ENCODE measurements at regions of chr15 and their contacts with region 1.

Region 1: DNA sequence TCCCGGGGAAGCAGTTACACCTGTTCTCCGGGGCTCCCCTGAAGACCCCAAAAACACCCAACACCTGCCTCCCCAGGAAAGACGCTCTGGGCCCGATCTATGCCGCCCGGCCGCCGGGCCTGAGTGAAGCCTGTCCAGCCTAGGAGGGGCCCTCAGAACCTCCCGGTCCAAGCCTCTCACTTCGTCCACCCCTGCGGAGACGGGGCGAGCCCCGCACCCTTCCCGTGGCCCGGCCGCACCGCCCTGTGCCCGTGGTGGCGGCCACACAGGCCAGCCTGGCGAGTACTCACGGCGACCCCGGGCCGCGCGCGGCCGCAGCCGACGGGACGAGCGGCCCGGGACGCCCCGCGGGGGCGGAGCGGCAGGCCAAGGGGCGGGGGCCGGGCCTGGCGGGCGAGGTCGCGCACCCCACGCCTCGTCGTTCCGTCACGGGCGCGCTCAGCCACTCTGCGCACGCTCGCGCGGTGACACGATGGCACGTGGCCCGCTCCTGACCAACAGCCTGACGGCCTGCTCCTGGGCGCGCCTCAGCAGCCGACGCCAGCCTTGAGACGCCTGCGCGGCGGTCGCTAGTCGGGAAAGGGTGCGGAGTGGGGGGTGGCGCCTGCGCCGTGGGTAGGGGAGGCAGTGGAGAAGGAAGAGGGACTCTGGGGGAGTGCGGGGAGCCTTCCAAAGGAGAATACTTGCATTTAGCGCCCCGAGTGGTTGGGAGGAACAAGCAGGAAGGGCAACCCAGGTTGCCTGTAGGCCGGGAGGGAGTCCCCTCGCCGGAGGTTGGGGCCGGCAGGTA is at the start of gene PARP6:
- DNase-seq: peak; percentile 94 to 100 (median 99)
- ATAC-seq: peak; percentile 96
- H3K4me3 ChIP-seq: peak within 1 kb of the TSS; percentile 71
- H3K4me3 Mint-ChIP-seq: peak within 1 kb of the TSS; percentile 87 to 95 (median 90)
- H3K27ac ChIP-seq: peak within 1 kb of the TSS; percentile 90
- H3K27ac Mint-ChIP-seq: peak within 1 kb of the TSS; percentile 87 to 96 (median 93)
- H3K4me1 ChIP-seq: peaks cover 18 to 25% of the 10 kb centered on the region in 2 donors
- H3K4me1 Mint-ChIP-seq: peaks cover 24 to 53% (median 44%) of the 10 kb centered on the region in 7 donors
- H3K27me3 ChIP-seq: no peaks in the 10 kb centered on the region
- H3K27me3 Mint-ChIP-seq: no peaks in the 10 kb centered on the region
- total RNA-seq, gene PARP6: 75.8 to 129 (median 127) TPM

Region 2: DNA sequence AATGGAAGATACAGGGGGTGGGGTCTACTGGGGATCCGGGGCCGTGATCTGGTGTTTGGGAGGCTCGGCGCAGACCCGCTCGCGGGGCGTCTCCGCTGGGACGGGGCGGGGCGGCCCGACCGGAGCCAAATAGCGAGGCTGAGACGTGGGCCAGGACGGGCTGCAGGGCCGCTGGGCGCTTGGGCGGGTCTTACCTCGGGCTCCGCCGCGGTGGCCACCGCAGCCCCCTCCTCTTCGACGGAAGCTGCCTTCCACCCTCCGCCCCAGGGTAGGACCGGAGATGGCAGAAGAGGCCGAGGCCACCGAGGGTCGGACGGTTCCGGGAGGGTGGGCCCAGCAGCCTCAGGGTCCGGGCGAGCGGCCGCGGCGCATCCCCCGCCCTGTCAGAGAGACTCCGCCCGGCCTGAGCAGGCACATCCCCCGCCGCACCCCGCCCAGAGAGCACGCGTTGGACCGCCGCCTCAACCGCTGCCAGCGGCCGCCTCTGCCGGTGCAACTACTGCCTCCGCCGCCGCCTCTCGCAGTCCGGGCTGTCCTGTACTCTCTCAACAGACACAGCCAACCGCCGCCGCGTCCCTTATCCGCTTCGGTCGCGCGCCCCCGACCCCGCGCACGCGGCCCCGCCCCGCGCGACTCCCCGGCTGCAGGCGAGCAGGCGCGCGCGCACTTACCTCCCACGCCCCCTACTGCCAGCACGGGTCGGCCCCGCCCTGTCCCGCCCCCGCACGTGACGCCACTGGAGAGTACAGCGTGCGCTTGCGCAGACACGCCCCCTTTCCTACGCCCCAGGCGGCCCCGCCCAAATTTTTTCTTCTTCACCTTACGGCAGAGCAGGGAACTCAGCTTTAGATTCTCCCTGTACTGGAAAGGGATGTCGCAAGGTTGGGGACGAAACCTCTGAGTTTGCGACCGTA is 154.7 kb before region 1 on chr15 and contains the start of gene MYO9A:
- CTCF ChIA-PET with region 1: no interaction called
- POLR2A ChIA-PET with region 1: no interaction called
- intact Hi-C with region 1: loop called (anchors 1 kb)
- DNase-seq: peak; percentile 93 to 99 (median 98)
- ATAC-seq: peak; percentile 90
- H3K4me3 ChIP-seq: peak within 1 kb of the TSS; percentile 86
- H3K4me3 Mint-ChIP-seq: peak within 1 kb of the TSS; percentile 89 to 99 (median 97)
- H3K27ac ChIP-seq: peak within 1 kb of the TSS; percentile 94
- H3K27ac Mint-ChIP-seq: peak within 1 kb of the TSS; percentile 81 to 99 (median 99)
- H3K4me1 ChIP-seq: peaks cover 7 to 11% of the 10 kb centered on the region in 2 donors
- H3K4me1 Mint-ChIP-seq: peaks cover 23 to 55% (median 47%) of the 10 kb centered on the region in 7 donors
- H3K27me3 ChIP-seq: no peaks in the 10 kb centered on the region
- H3K27me3 Mint-ChIP-seq: peaks cover 0 to 23% (median 0%) of the 10 kb centered on the region in 5 donors
- total RNA-seq, gene MYO9A: 21.6 to 53.3 (median 29.7) TPM

Region 3: GRCh38 chr15:72231066-72231846 is 41.2 kb before region 1 on chr15 and contains the start of gene PKM:
- CTCF ChIA-PET with region 1: interaction called, 9 read pairs
- POLR2A ChIA-PET with region 1: interaction called, 38 read pairs
- intact Hi-C with region 1: loop called (anchors 1 kb)
- DNase-seq: peak; percentile 82 to 99 (median 88)
- ATAC-seq: peak; percentile 65
- H3K4me3 ChIP-seq: peak within 1 kb of the TSS; percentile 73
- H3K4me3 Mint-ChIP-seq: peak within 1 kb of the TSS; percentile 95 to 100 (median 99)
- H3K27ac ChIP-seq: peak within 1 kb of the TSS; percentile 73
- H3K27ac Mint-ChIP-seq: peak within 1 kb of the TSS; percentile 89 to 99 (median 95)
- H3K4me1 ChIP-seq: peaks cover 34 to 39% of the 10 kb centered on the region in 2 donors
- H3K4me1 Mint-ChIP-seq: peaks cover 40 to 55% (median 50%) of the 10 kb centered on the region in 7 donors
- H3K27me3 ChIP-seq: no peaks in the 10 kb centered on the region
- H3K27me3 Mint-ChIP-seq: peaks cover 0 to 3% (median 0%) of the 10 kb centered on the region in 5 donors
- total RNA-seq, gene PKM: 237 to 1,627 (median 329) TPM

Region 4: GRCh38 chr15:72319985-72320671 is 47.7 kb after region 1 on chr15 and contains the start of gene CELF6:
- CTCF ChIA-PET with region 1: no interaction called
- POLR2A ChIA-PET with region 1: no interaction called
- intact Hi-C with region 1: loop called in 1 of 2 experiments (anchors 1 kb)
- DNase-seq: peak; percentile 56 to 88 (median 65)
- ATAC-seq: peak; percentile 92
- H3K4me3 ChIP-seq: peak within 1 kb of the TSS; percentile 57
- H3K4me3 Mint-ChIP-seq: peak within 1 kb of the TSS; percentile 78 to 90 (median 86)
- H3K27ac ChIP-seq: no peak within 1 kb of the TSS
- H3K27ac Mint-ChIP-seq: peak within 1 kb of the TSS; percentile 9 to 91 (median 76)
- H3K4me1 ChIP-seq: peaks cover 7 to 10% of the 10 kb centered on the region in 2 donors
- H3K4me1 Mint-ChIP-seq: peaks cover 20 to 25% (median 21%) of the 10 kb centered on the region in 7 donors
- H3K27me3 ChIP-seq: no peaks in the 10 kb centered on the region
- H3K27me3 Mint-ChIP-seq: peaks cover 0 to 34% (median 0%) of the 10 kb centered on the region in 5 donors
- total RNA-seq, gene CELF6: 1.2 to 5.7 (median 3.8) TPM

Region 5: GRCh38 chr15:72491768-72492167 is 219.4 kb after region 1 on chr15:
- CTCF ChIA-PET with region 1: no interaction called
- POLR2A ChIA-PET with region 1: no interaction called
- intact Hi-C with region 1: no loop called
- DNase-seq: no peak
- ATAC-seq: no peak
- H3K4me3 ChIP-seq: no peak overlapping the region
- H3K4me3 Mint-ChIP-seq: peak overlapping the region in 8 of 10 donors; percentile 3 to 60 (median 44)
- H3K27ac ChIP-seq: no peak overlapping the region
- H3K27ac Mint-ChIP-seq: peak overlapping the region in 3 of 9 donors; percentile 53 to 84 (median 67)
- H3K4me1 ChIP-seq: peaks cover 33 to 46% of the 10 kb centered on the region in 2 donors
- H3K4me1 Mint-ChIP-seq: peaks cover 29 to 97% (median 87%) of the 10 kb centered on the region in 7 donors
- H3K27me3 ChIP-seq: no peaks in the 10 kb centered on the region
- H3K27me3 Mint-ChIP-seq: no peaks in the 10 kb centered on the region

Region 6: DNA sequence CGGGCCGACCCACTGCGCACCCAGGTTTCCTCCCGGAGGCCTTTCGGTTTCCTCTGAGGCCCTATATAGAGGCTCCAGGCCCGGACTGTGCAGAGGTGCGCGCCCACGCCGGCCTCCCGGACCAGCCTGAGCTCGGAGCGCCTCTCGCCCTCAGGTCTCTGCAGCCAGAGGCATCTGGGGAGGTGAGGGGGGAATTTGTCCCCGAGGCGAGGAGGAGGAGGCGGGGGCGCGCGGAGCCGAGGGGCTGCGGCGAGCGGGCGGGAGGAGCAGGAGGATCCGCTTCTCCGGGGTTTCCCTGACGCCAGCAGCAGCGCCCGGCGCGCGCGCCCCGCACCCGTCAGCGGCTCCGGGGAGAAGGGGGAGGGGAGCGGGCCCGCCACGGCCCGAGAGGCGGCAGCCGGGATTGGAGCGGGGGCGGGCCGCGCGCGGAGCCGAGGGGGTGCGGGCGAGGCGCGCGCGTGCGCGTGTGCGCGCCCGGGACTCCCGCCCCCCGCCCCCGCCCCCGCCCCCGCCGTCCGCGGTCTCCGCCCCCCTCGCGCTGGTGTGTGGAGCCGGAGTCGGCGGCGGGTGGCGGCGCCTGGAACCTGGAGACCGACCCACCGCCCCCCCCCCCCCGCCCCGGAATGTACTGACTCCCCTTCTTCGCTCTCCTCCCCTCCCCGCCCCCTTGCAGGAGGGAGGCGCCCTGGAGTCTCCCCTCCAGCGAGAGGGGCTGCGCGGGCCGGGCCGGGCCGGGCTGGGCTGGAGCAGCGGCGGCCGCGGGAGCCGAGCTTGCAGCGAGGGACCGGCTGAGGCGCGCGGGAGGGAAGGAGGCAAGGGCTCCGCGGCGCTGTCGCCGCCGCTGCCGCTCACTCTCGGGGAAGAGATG is 779.6 kb after region 1 on chr15 and contains the start of gene NEO1:
- CTCF ChIA-PET with region 1: no interaction called
- POLR2A ChIA-PET with region 1: no interaction called
- intact Hi-C with region 1: loop called in 1 of 2 experiments (anchors 1 kb)
- DNase-seq: peak; percentile 71 to 86 (median 84)
- ATAC-seq: peak; percentile 90
- H3K4me3 ChIP-seq: peak within 1 kb of the TSS; percentile 74
- H3K4me3 Mint-ChIP-seq: peak within 1 kb of the TSS; percentile 81 to 95 (median 88)
- H3K27ac ChIP-seq: peak within 1 kb of the TSS; percentile 74
- H3K27ac Mint-ChIP-seq: peak within 1 kb of the TSS; percentile 36 to 88 (median 62)
- H3K4me1 ChIP-seq: peaks cover 8 to 11% of the 10 kb centered on the region in 2 donors
- H3K4me1 Mint-ChIP-seq: peaks cover 4 to 14% (median 11%) of the 10 kb centered on the region in 7 donors
- H3K27me3 ChIP-seq: no peaks in the 10 kb centered on the region
- H3K27me3 Mint-ChIP-seq: peaks cover 0 to 37% (median 0%) of the 10 kb centered on the region in 5 donors
- total RNA-seq, gene NEO1: 4.4 to 9.5 (median 6.9) TPM

Measured in naive thymus-derived CD4-positive, alpha-beta T cell (primary cell).